SK-N-SH (cell line): ENCODE measurements at regions of chr11 and their contacts with region 1.

Region 1: DNA sequence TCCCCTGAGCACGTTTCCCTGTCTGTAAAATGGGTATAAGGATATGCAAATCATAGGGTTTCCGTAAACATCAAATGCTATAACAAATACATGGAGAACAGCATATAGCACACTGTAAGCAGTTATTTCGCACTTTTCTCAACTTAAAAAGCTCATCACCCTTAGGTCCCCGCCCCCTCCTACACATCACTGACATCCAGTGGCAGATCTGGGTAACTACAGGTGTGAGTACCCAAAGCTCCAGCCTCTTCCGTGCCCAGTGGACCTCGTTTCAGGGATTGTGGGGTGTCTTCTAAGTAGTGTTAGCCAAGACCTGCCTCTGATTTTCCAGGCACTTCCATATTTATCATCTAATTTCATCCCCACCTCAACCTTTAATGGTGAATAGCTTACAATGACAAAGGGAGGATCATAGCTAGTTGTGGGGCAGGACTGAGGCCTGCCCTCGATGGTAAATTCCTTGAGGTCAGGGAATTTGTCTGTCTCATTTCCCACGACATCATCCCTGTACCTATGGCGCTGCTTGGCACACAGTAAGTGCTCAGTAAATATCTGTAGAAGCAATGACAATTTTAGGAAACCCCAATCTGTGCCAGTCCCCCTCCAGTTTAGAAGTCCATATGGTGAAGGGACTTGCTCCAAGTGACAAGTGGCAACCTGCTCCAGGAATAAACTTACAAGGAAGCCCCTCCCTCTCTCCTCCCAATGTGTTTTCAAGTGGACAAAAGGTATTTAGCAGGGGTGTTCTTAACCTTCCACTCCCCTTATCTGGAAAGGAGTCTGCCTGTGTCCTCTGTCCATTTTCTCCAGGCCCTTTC is 340.5 kb downstream of the TENM4 start:
- DNase-seq: peak; percentile 82
- H3K4me3 ChIP-seq: no peak overlapping the region
- H3K27ac ChIP-seq: no peak overlapping the region; a peak in 2 of 4 replicates
- H3K4me1 ChIP-seq: peaks cover 0 to 46% of the 10 kb centered on the region in 2 experiments; a peak in 1 of 4 replicates
- H3K27me3 ChIP-seq: no peaks in the 10 kb centered on the region
- CTCF ChIP-seq: peak; percentile 79
- EP300 ChIP-seq: no peak
- RAD21 ChIP-seq: peak; percentile 86

Region 2: DNA sequence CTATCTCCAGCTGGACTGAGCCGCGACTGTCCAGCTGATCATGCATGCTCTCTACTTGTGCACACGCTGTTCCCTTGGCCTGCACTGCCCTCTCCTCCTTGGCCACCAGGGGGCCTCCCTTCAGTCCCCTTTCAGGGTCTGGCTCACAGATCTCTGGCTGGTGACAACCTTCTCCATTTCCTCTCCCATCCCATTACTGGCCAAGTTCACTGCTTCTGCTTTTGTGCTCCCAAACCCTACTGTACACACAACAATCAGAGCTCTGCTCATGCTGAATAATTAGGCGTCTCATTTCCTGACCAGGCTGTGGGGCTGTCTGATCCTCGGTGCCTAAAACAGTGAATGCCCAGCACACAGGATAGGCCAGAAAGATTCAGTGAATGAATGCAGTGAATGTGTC is 301.6 kb before region 1 on chr11:
- CTCF ChIA-PET with region 1: interaction called, 15 read pairs
- POLR2A ChIA-PET with region 1: no interaction called
- DNase-seq: peak; percentile 72
- H3K4me3 ChIP-seq: no peak overlapping the region
- H3K27ac ChIP-seq: peak overlapping the region in 1 of 2 experiments; percentile 53; a peak in 2 of 4 replicates
- H3K4me1 ChIP-seq: peaks cover 34 to 37% of the 10 kb centered on the region in 2 experiments
- H3K27me3 ChIP-seq: no peaks in the 10 kb centered on the region
- CTCF ChIP-seq: peak; percentile 85
- EP300 ChIP-seq: no peak
- RAD21 ChIP-seq: peak; percentile 81

Region 3: GRCh38 chr11:78961247-78961646 is 139.1 kb before region 1 on chr11:
- CTCF ChIA-PET with region 1: interaction called, 33 read pairs
- POLR2A ChIA-PET with region 1: no interaction called
- DNase-seq: peak; percentile 66
- H3K4me3 ChIP-seq: peak overlapping the region; percentile 58 to 68; a peak in 3 of 4 replicates
- H3K27ac ChIP-seq: peak overlapping the region in 1 of 2 experiments; percentile 87; a peak in 2 of 4 replicates
- H3K4me1 ChIP-seq: peaks cover 10 to 46% of the 10 kb centered on the region in 2 experiments; a peak in 3 of 4 replicates
- H3K27me3 ChIP-seq: no peaks in the 10 kb centered on the region
- CTCF ChIP-seq: peak; percentile 58
- EP300 ChIP-seq: no peak
- RAD21 ChIP-seq: peak; percentile 81

Region 4: DNA sequence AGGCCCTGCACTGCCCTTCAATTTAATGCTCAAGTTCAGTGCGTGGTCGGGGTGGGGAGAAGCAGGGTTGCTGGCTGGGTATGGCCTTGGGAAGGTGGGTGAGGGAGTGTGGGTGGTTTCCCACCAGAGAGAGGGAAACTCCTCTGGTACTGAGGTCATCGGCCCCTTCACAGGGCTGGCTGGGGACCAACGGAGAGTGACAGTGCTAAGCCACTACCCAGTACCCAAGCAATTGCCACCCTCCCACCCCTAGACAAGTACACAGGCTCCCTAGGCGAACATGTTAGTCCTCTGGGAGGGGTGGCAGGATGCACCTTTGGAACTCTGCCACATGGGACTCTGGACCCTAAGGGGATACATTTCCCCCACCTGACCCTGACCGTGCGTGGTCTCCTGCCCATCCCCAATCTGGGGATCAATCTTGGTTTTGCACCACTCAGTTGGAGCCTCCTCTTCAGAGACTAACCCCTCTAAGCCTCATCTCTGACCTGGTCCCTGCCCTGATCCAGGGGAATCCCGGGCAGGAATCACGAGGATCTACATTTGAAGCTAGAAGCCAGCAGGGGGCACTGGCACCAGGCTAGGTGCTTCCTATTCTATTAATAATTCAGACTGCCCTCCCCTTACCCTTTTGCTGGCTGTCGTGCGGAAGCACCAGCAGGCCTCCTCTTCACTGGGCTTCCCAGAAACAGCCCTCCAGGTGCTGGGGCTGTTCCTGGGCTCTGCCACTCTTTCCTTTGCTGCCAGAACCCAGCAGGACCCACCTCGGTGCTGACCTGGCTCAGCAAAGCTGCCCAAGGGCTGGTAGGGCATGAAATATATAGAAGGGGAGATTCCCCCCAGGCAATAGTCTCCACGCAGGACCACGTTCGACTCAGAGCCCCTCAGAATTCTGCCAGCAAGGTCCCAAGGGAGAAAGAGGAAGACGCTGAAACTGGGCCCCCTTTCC is 37.2 kb before region 1 on chr11:
- CTCF ChIA-PET with region 1: interaction called, 21 read pairs
- POLR2A ChIA-PET with region 1: interaction called, 4 read pairs
- DNase-seq: peak; percentile 73
- H3K4me3 ChIP-seq: no peak overlapping the region; a peak in 1 of 4 replicates
- H3K27ac ChIP-seq: peak overlapping the region in 1 of 2 experiments; percentile 73; a peak in 2 of 4 replicates
- H3K4me1 ChIP-seq: peaks cover 6 to 63% of the 10 kb centered on the region in 2 experiments; a peak in 3 of 4 replicates
- H3K27me3 ChIP-seq: no peaks in the 10 kb centered on the region
- CTCF ChIP-seq: peak; percentile 70
- EP300 ChIP-seq: peak in 1 of 2 experiments; percentile 21; a peak in 1 of 4 replicates
- RAD21 ChIP-seq: peak; percentile 72

Region 5: GRCh38 chr11:79081471-79082031 is 18.8 kb before region 1 on chr11:
- CTCF ChIA-PET with region 1: interaction called, 34 read pairs
- POLR2A ChIA-PET with region 1: no interaction called
- DNase-seq: no peak
- H3K4me3 ChIP-seq: no peak overlapping the region
- H3K27ac ChIP-seq: peak overlapping the region; percentile 50 to 85
- H3K4me1 ChIP-seq: peaks cover 36 to 64% of the 10 kb centered on the region in 2 experiments
- H3K27me3 ChIP-seq: no peaks in the 10 kb centered on the region
- CTCF ChIP-seq: no peak
- EP300 ChIP-seq: no peak
- RAD21 ChIP-seq: no peak

Region 6: GRCh38 chr11:79087238-79087960 is 12.9 kb before region 1 on chr11:
- CTCF ChIA-PET with region 1: interaction called, 34 read pairs
- POLR2A ChIA-PET with region 1: no interaction called
- DNase-seq: peak; percentile 40
- H3K4me3 ChIP-seq: no peak overlapping the region
- H3K27ac ChIP-seq: peak overlapping the region; percentile 92 to 94
- H3K4me1 ChIP-seq: peaks cover 34 to 49% of the 10 kb centered on the region in 2 experiments
- H3K27me3 ChIP-seq: no peaks in the 10 kb centered on the region
- CTCF ChIP-seq: no peak
- EP300 ChIP-seq: peak; percentile 59 to 98; a peak in 3 of 4 replicates
- RAD21 ChIP-seq: no peak

Region 7: GRCh38 chr11:79113054-79113690 is 12.9 kb after region 1 on chr11:
- CTCF ChIA-PET with region 1: interaction called, 33 read pairs
- POLR2A ChIA-PET with region 1: no interaction called
- DNase-seq: no peak
- H3K4me3 ChIP-seq: no peak overlapping the region
- H3K27ac ChIP-seq: peak overlapping the region; percentile 17 to 25; a peak in 2 of 4 replicates
- H3K4me1 ChIP-seq: peaks cover 8 to 11% of the 10 kb centered on the region in 2 experiments; a peak in 3 of 4 replicates
- H3K27me3 ChIP-seq: no peaks in the 10 kb centered on the region
- CTCF ChIP-seq: no peak
- EP300 ChIP-seq: peak in 1 of 2 experiments; percentile 44; a peak in 1 of 4 replicates
- RAD21 ChIP-seq: no peak